ENCODE measurements at regions of chr1 and their contacts with region 1.

Region 1: GRCh38 chr1:63063367-63063766 is 259.0 kb upstream of the FOXD3 start:
- DNase-seq: no peak

Region 2: DNA sequence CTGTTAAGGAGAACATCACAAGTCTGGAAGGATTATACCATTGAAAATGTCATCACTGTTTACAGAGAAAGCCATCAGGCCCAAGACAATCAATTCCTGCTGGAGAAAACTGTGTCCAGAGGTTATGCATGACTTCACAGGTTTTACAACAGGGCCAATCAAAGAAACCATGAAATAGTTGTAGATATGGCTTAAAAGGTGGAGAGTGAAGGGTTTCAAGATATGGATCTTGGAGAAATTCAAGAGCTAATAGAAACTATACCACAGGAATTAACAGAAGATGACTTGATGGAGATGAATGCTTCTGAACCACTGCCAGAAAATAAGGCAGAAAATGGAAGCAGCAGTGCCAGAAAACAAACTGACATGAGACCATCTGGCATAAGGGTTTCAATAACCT is 596.3 kb before region 1 on chr1:
- intact Hi-C with region 1: loop called in 1 of 2 experiments (anchors 5 kb)
- DNase-seq: no peak

Region 3: DNA sequence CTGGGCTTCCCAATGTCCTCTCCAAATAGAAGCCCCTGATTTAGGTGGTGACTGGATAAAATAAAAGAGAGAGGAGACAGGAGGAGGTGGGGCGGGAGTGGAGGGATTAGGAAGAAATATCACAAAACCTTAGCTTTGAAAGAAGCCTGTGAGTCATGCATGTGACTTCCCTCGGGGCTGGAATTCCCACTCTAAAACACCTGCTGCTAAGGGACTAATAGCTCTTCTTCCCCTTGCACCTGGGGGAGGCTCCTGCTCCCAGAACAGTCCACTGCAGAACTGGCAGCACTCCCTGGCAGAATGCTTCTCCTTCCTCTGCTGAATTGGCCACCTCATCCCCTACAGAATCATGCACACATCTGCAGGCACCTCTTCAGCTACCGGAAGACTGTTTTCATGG is 72.2 kb before region 1 on chr1:
- intact Hi-C with region 1: no loop called
- DNase-seq: no peak

Measured in posterior vena cava (tissue), 2 donors.